Common myeloid progenitor, CD34-positive (primary cell): ENCODE measurements at regions of chr11 and their contacts with region 1.

Region 1: GRCh38 chr11:106076919-106077608 is at the start of gene KBTBD3:
- DNase-seq: peak; percentile 100
- H3K4me3 ChIP-seq: peak within 1 kb of the TSS; percentile 86 to 99 (median 96)
- H3K27ac ChIP-seq: peak within 1 kb of the TSS; percentile 96 to 98
- H3K4me1 ChIP-seq: peaks cover 7 to 39% (median 22%) of the 10 kb centered on the region in 4 experiments
- H3K27me3 ChIP-seq: no peaks in the 10 kb centered on the region

Region 2: GRCh38 chr11:106063009-106063408 is 14.1 kb before region 1 on chr11:
- CTCF ChIA-PET with region 1: no interaction called
- POLR2A ChIA-PET with region 1: no interaction called
- DNase-seq: peak in 2 of 3 donors; percentile 5 to 7
- H3K4me3 ChIP-seq: no peak overlapping the region
- H3K27ac ChIP-seq: no peak overlapping the region
- H3K4me1 ChIP-seq: no peaks in the 10 kb centered on the region
- H3K27me3 ChIP-seq: no peaks in the 10 kb centered on the region

Region 3: DNA sequence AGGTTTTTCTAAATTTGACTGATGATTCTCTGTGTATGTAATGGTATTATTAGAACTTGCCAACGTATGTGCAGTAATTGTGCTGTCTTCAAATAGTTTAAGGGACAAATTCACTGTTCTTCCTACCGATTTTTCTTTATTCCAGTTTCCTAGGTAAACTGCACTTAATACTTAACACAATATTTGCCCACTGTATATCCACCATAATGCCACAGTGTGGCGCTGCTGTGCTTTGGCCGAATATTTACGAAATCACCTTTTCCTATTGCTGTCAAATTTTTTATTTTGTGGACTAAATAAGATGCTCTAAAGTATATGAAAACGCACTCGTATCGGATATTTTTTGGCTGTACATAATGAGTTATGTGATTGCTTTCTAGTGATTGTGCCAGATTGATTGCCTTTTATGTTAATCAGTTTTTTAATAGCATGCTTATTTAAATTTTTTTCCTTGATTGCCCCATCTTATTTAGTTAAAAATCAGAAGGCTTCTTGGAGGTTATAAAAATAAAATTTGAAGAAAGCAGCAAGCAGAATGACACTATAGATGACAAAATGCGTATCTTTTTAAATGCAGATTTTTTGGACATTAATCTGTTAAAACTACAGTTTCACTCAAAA is 10.9 kb after region 1 on chr11:
- CTCF ChIA-PET with region 1: interaction called, 14 read pairs
- POLR2A ChIA-PET with region 1: no interaction called
- DNase-seq: peak; percentile 56 to 77 (median 71)
- H3K4me3 ChIP-seq: peak overlapping the region in 1 of 7 experiments; percentile 25
- H3K27ac ChIP-seq: no peak overlapping the region
- H3K4me1 ChIP-seq: peaks cover 0 to 15% (median 3%) of the 10 kb centered on the region in 4 experiments
- H3K27me3 ChIP-seq: no peaks in the 10 kb centered on the region